ENCODE measurements at regions of chr20 and their contacts with region 1.

Region 1: DNA sequence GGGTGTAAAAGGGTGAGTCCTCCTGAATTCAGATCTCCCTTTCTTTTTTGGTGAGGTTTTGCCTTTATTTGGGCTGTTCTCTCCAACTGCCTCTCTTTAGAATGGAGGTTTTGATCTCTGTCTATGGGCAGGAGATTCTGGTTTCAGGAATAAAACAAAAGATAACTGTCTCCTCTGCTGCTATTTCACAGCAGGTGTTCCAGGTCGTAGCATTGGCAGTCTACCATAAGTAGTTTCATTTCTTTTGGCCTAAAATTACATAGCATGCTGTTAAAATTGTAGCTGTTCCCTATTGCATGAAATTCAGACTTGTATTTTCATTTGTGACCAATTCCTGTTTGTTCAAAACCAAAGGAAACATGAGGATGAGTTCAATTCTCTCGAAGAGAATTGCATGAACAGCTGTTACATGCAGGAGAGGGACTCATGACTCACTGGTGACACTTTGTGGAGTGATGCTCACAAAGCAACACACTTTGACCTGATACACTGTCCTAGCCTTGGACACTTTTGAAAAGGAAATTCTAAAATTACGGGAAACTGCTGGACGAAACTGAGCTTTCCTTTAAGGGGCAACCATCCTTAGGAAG is 76.8 kb upstream of the SIRPG start:
- DNase-seq: peak; percentile 65
- H3K4me3 Mint-ChIP-seq: no peak overlapping the region
- H3K27ac Mint-ChIP-seq: peak overlapping the region; percentile 5
- H3K4me1 Mint-ChIP-seq: peaks cover 37% of the 10 kb centered on the region
- H3K27me3 Mint-ChIP-seq: no peaks in the 10 kb centered on the region

Region 2: GRCh38 chr20:1509237-1509636 is 225.1 kb before region 1 on chr20:
- CTCF ChIA-PET with region 1: interaction called, 18 read pairs
- intact Hi-C with region 1: loop called (anchors 1 kb)
- DNase-seq: peak; percentile 58
- H3K4me3 Mint-ChIP-seq: no peak overlapping the region
- H3K27ac Mint-ChIP-seq: no peak overlapping the region
- H3K4me1 Mint-ChIP-seq: no peaks in the 10 kb centered on the region
- H3K27me3 Mint-ChIP-seq: no peaks in the 10 kb centered on the region

Region 3: GRCh38 chr20:1576641-1577040 is 157.7 kb before region 1 on chr20:
- CTCF ChIA-PET with region 1: interaction called, 3 read pairs
- intact Hi-C with region 1: loop called (anchors 2 kb)
- DNase-seq: no peak
- H3K4me3 Mint-ChIP-seq: no peak overlapping the region
- H3K27ac Mint-ChIP-seq: no peak overlapping the region
- H3K4me1 Mint-ChIP-seq: peaks cover 2% of the 10 kb centered on the region
- H3K27me3 Mint-ChIP-seq: no peaks in the 10 kb centered on the region

Region 4: GRCh38 chr20:1651268-1652058 is 82.9 kb before region 1 on chr20:
- CTCF ChIA-PET with region 1: interaction called, 15 read pairs
- intact Hi-C with region 1: no loop called
- DNase-seq: peak; percentile 36
- H3K4me3 Mint-ChIP-seq: no peak overlapping the region
- H3K27ac Mint-ChIP-seq: peak overlapping the region; percentile 43
- H3K4me1 Mint-ChIP-seq: peaks cover 84% of the 10 kb centered on the region
- H3K27me3 Mint-ChIP-seq: no peaks in the 10 kb centered on the region

Region 5: DNA sequence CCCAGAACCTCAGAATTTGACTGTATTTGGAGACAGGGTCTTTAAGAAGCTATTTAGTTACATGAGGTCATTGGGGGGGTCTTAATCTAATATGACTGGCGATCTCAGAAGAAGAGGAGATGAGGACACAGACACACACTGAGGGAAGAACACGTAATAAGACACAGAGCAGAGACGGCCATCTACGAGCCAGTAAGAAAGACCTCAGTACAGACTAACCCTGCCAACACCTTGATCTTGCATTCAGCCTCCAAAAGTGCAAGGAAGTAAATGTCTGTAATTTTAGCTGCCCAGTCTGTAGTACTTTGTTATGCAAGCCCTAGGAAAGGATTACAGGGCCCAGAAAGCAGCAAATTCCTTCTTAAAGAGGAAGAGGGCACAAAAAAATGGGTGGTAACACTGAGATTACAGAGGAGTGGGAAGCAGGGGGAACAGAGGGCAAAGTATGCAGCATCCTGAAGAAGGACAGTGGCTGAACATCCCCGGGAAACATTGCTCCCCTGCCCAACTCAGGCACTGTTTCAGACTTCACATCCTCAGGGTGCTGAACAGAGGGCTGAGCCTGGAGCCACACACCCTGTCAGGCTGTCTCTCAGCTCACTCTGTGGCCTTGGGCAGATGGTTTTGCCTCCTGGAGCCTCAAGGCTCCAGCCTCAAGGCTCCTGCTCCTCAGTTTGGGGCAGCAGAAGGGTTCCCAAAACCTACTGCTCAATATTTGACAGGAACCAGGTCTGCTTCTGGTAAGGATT is 48.9 kb before region 1 on chr20:
- CTCF ChIA-PET with region 1: interaction called, 4 read pairs
- intact Hi-C with region 1: loop called (anchors 1 kb)
- DNase-seq: peak; percentile 56
- H3K4me3 Mint-ChIP-seq: peak overlapping the region; percentile 83
- H3K27ac Mint-ChIP-seq: peak overlapping the region; percentile 95
- H3K4me1 Mint-ChIP-seq: peaks cover 82% of the 10 kb centered on the region
- H3K27me3 Mint-ChIP-seq: no peaks in the 10 kb centered on the region